Adrenal gland (tissue), 19 donors: ENCODE measurements at regions of chr4 and their contacts with region 1.

Region 1: GRCh38 chr4:1167247-1167949 is 5.0 kb downstream of the SPON2 start:
- DNase-seq: peak; percentile 73 to 90 (median 83)
- H3K4me3 ChIP-seq: peak overlapping the region in 2 of 4 donors; percentile 40 to 59
- H3K27ac ChIP-seq: peak overlapping the region in 1 of 5 donors; percentile 24
- H3K4me1 ChIP-seq: peaks cover 12 to 29% of the 10 kb centered on the region in 2 donors
- H3K27me3 ChIP-seq: peaks cover 21% of the 10 kb centered on the region
- CTCF ChIP-seq: peak; percentile 76 to 93 (median 92)
- POLR2A ChIP-seq: no peak

Region 2: DNA sequence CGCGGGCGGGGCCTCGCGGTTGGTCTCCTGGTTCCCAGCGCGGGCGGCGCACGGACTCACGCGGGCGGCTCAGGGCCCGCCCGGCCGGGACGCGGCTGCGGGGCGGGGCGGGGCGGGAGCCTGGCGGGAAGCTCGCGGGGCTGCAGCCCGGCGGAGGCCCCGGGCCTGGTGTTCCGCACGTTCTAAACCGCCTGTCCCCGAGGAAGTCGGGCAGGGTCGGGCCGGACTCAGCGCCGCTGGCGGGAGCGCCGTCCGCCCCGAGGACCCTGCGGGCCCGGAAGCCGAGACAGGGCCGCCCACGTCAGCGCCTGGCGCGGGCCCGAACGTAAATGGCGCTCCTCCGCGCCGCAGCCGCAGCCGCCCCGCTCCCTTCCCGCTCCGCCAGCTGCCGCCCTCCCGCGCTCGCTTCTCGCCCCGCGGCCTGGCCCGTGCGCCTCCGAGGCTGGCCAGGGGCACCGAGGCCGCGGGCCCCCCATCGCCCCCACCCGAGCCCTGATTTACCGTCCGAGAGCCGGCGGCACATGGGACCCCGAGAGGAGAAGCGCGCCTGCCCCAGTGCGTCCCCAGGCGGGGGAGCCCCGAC is 81.8 kb after region 1 on chr4:
- intact Hi-C with region 1: loop called in 1 of 2 experiments (anchors 5 kb)
- DNase-seq: peak; percentile 82 to 89 (median 86)
- H3K4me3 ChIP-seq: peak overlapping the region; percentile 19 to 83 (median 59)
- H3K27ac ChIP-seq: peak overlapping the region; percentile 84 to 99 (median 94)
- H3K4me1 ChIP-seq: peaks cover 26 to 40% of the 10 kb centered on the region in 2 donors
- H3K27me3 ChIP-seq: no peaks in the 10 kb centered on the region
- CTCF ChIP-seq: no peak
- POLR2A ChIP-seq: peak; percentile 33 to 61

Region 3: GRCh38 chr4:1266881-1267763 is 99.7 kb after region 1 on chr4:
- intact Hi-C with region 1: loop called in 1 of 2 experiments (anchors 5 kb)
- DNase-seq: no peak
- H3K4me3 ChIP-seq: no peak overlapping the region
- H3K27ac ChIP-seq: peak overlapping the region in 1 of 5 donors; percentile 36
- H3K4me1 ChIP-seq: no peaks in the 10 kb centered on the region
- H3K27me3 ChIP-seq: no peaks in the 10 kb centered on the region
- CTCF ChIP-seq: no peak
- POLR2A ChIP-seq: no peak